ENCODE measurements at regions of chr5 and their contacts with region 1.

Region 1: GRCh38 chr5:174327317-174328236 is 282.1 kb downstream of the NSG2 start:
- DNase-seq: peak in 5 of 9 experiments; percentile 6 to 39 (median 22)
- ATAC-seq: no peak
- H3K4me3 ChIP-seq: no peak overlapping the region
- H3K4me3 Mint-ChIP-seq: no peak overlapping the region
- H3K27ac ChIP-seq: no peak overlapping the region
- H3K27ac Mint-ChIP-seq: no peak overlapping the region
- H3K4me1 ChIP-seq: no peaks in the 10 kb centered on the region
- H3K4me1 Mint-ChIP-seq: no peaks in the 10 kb centered on the region
- H3K27me3 ChIP-seq: peaks cover 0 to 7% of the 10 kb centered on the region in 2 experiments
- H3K27me3 Mint-ChIP-seq: peaks cover 21% of the 10 kb centered on the region
- CTCF ChIP-seq: no peak

Region 2: GRCh38 chr5:174436781-174437201 is 109.2 kb after region 1 on chr5:
- CTCF ChIA-PET with region 1: no interaction called
- POLR2A ChIA-PET with region 1: no interaction called
- intact Hi-C with region 1: no loop called
- DNase-seq: no peak
- ATAC-seq: no peak
- H3K4me3 ChIP-seq: no peak overlapping the region
- H3K4me3 Mint-ChIP-seq: no peak overlapping the region
- H3K27ac ChIP-seq: no peak overlapping the region
- H3K27ac Mint-ChIP-seq: no peak overlapping the region
- H3K4me1 ChIP-seq: no peaks in the 10 kb centered on the region
- H3K4me1 Mint-ChIP-seq: no peaks in the 10 kb centered on the region
- H3K27me3 ChIP-seq: no peaks in the 10 kb centered on the region
- H3K27me3 Mint-ChIP-seq: peaks cover 5% of the 10 kb centered on the region
- CTCF ChIP-seq: no peak

Region 3: GRCh38 chr5:174793684-174794328 is 466.2 kb after region 1 on chr5:
- CTCF ChIA-PET with region 1: no interaction called
- POLR2A ChIA-PET with region 1: no interaction called
- intact Hi-C with region 1: loop called in 1 of 2 experiments (anchors 10 kb)
- DNase-seq: peak in 7 of 9 experiments; percentile 17 to 50 (median 30)
- ATAC-seq: no peak
- H3K4me3 ChIP-seq: no peak overlapping the region
- H3K4me3 Mint-ChIP-seq: no peak overlapping the region
- H3K27ac ChIP-seq: no peak overlapping the region
- H3K27ac Mint-ChIP-seq: no peak overlapping the region
- H3K4me1 ChIP-seq: no peaks in the 10 kb centered on the region
- H3K4me1 Mint-ChIP-seq: peaks cover 4% of the 10 kb centered on the region
- H3K27me3 ChIP-seq: peaks cover 0 to 5% of the 10 kb centered on the region in 2 experiments
- H3K27me3 Mint-ChIP-seq: peaks cover 43% of the 10 kb centered on the region
- CTCF ChIP-seq: peak; percentile 56

Measured in CD8-positive, alpha-beta T cell (primary cell).